Psoas muscle (tissue), 8 donors: ENCODE measurements at regions of chr13 and their contacts with region 1.

Region 1: DNA sequence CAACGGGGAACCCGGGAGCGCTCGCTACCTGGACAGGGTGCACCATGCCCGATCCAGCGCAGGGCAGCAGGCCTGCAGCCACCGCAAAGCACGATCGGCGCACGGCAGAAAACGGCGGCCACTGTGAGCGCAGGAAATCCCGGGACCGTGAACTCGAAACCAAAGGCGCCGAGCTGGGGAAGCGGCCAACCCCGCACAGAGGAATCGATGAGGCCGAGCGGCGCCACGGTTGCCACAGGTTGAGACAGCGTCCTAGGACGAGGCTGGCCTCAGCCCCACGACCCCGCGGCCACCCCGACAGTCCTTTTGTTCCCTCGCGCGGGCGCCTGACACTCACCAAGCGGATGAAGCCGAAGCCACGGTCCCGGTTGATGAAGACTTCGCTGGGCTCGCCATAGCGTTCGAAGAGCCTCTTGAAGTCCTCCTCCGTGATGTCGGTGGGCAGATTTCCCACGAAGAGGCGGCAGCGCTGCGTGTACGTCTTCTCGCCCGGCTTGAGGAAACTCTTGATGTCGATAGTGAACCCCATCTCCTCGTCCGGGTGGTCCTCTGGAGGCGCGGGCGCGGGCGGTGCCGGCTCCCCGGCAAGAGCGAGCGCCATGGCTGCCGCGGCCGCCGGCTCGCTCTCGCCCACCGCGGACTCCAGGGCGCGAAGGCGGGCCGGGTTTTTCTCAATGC is 557 bp downstream of the PSPC1 start:
- DNase-seq: peak; percentile 65 to 79
- ATAC-seq: peak; percentile 70 to 81 (median 74)
- H3K4me3 ChIP-seq: peak overlapping the region; percentile 96
- H3K27ac ChIP-seq: peak overlapping the region; percentile 97
- H3K4me1 ChIP-seq: peaks cover 9% of the 10 kb centered on the region
- H3K27me3 ChIP-seq: no peaks in the 10 kb centered on the region
- CTCF ChIP-seq: no peak

Region 2: GRCh38 chr13:19329365-19329764 is 452.8 kb before region 1 on chr13:
- intact Hi-C with region 1: no loop called
- DNase-seq: no peak
- ATAC-seq: no peak
- H3K4me3 ChIP-seq: no peak overlapping the region
- H3K27ac ChIP-seq: no peak overlapping the region
- H3K4me1 ChIP-seq: no peaks in the 10 kb centered on the region
- H3K27me3 ChIP-seq: no peaks in the 10 kb centered on the region
- CTCF ChIP-seq: no peak

Region 3: GRCh38 chr13:19633479-19634255 is 148.5 kb before region 1 on chr13 and contains the start of gene MPHOSPH8:
- intact Hi-C with region 1: loop called in 1 of 2 experiments (anchors 10 kb)
- DNase-seq: peak; percentile 94 to 95
- ATAC-seq: peak; percentile 99
- H3K4me3 ChIP-seq: peak within 1 kb of the TSS; percentile 89
- H3K27ac ChIP-seq: peak within 1 kb of the TSS; percentile 87
- H3K4me1 ChIP-seq: peaks cover 15% of the 10 kb centered on the region
- H3K27me3 ChIP-seq: no peaks in the 10 kb centered on the region
- CTCF ChIP-seq: no peak
- total RNA-seq, gene MPHOSPH8: 9.2 to 15.6 (median 13.3) TPM

Region 4: GRCh38 chr13:19863323-19864023 is 81.3 kb after region 1 on chr13 and contains the start of gene ZMYM5:
- intact Hi-C with region 1: loop called (anchors 1 to 5 kb)
- DNase-seq: peak; percentile 99 to 100
- ATAC-seq: peak; percentile 95 to 98 (median 97)
- H3K4me3 ChIP-seq: peak within 1 kb of the TSS; percentile 79
- H3K27ac ChIP-seq: peak within 1 kb of the TSS; percentile 94
- H3K4me1 ChIP-seq: peaks cover 16% of the 10 kb centered on the region
- H3K27me3 ChIP-seq: no peaks in the 10 kb centered on the region
- CTCF ChIP-seq: no peak
- total RNA-seq, gene ZMYM5: 5.5 to 8.0 (median 6.1) TPM